ENCODE measurements at regions of chr2 and their contacts with region 1.

Region 1: GRCh38 chr2:156400706-156401678 is 35.2 kb upstream of the GPD2 start:
- DNase-seq: peak; percentile 82
- ATAC-seq: peak; percentile 78
- H3K4me3 ChIP-seq: peak overlapping the region; percentile 70
- H3K27ac ChIP-seq: peak overlapping the region; percentile 86
- H3K4me1 ChIP-seq: peaks cover 17% of the 10 kb centered on the region
- H3K27me3 ChIP-seq: no peaks in the 10 kb centered on the region
- CTCF ChIP-seq: no peak
- EP300 ChIP-seq: peak in 1 of 2 experiments; percentile 83; a peak in 1 of 4 replicates
- POLR2A ChIP-seq: no peak
- RAD21 ChIP-seq: no peak

Region 2: DNA sequence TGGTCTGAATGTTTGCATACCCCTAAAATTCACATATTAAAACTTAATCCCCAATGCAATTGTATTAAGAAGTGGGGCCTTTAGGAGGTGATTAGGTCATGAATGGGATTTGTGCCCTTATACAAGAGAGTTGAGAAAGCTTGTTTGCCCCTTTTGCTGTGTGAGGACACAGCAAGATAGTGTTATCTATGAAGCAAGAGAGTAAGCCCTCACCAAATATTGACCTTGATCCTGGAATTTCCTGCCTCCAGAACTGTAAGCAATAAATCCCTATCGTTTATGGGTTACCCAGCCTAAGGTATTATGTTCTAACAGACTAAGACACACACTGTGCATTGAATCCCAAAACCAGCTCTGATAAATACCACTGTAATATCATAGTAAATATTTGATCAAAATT is 100.7 kb before region 1 on chr2:
- CTCF ChIA-PET with region 1: no interaction called
- POLR2A ChIA-PET with region 1: no interaction called
- RAD21 ChIA-PET with region 1: no interaction called
- SMC1A ChIA-PET with region 1: no interaction called
- in situ Hi-C with region 1: no loop called
- intact Hi-C with region 1: no loop called
- DNase-seq: no peak
- ATAC-seq: no peak
- H3K4me3 ChIP-seq: no peak overlapping the region
- H3K27ac ChIP-seq: no peak overlapping the region
- H3K4me1 ChIP-seq: no peaks in the 10 kb centered on the region
- H3K27me3 ChIP-seq: no peaks in the 10 kb centered on the region; a peak in 1 of 4 replicates
- CTCF ChIP-seq: no peak
- EP300 ChIP-seq: no peak
- POLR2A ChIP-seq: no peak
- RAD21 ChIP-seq: no peak

Region 3: DNA sequence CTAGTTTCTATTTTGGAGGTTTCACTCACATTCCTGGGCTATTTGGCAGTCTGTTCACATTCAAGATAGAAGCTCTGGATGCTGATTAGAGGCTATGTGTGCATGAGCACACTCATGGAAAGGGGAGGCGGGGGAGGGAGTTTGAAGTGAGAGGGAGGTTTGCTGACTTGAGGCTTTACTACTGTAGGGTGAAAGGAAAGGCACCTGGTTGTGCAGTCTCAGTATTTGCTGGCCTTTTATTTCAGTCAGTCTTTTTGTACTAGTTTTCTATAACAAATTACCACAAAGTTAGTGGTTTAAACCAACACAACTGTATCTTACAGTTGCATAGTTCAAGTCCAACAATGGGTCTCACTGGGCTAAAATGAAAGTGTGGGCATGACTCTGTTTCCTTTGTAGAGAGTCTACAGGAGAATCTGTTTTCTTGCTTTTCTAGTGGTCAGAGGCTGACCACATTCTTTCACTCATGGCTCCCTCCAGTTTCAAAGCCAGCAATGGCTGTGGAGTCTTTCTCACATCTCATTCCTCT is 20.8 kb before region 1 on chr2:
- CTCF ChIA-PET with region 1: interaction called, 9 read pairs
- POLR2A ChIA-PET with region 1: interaction called, 4 read pairs
- RAD21 ChIA-PET with region 1: interaction called, 12 read pairs
- SMC1A ChIA-PET with region 1: interaction called, 21 read pairs
- in situ Hi-C with region 1: no loop called
- intact Hi-C with region 1: loop called (anchors 1 kb)
- DNase-seq: peak; percentile 45
- ATAC-seq: peak; percentile 92
- H3K4me3 ChIP-seq: no peak overlapping the region
- H3K27ac ChIP-seq: no peak overlapping the region
- H3K4me1 ChIP-seq: peaks cover 12% of the 10 kb centered on the region
- H3K27me3 ChIP-seq: no peaks in the 10 kb centered on the region
- CTCF ChIP-seq: no peak
- EP300 ChIP-seq: no peak
- POLR2A ChIP-seq: no peak
- RAD21 ChIP-seq: no peak

Region 4: GRCh38 chr2:156385242-156385641 is 15.8 kb before region 1 on chr2:
- CTCF ChIA-PET with region 1: interaction called, 9 read pairs
- POLR2A ChIA-PET with region 1: interaction called, 4 read pairs
- RAD21 ChIA-PET with region 1: interaction called, 12 read pairs
- SMC1A ChIA-PET with region 1: interaction called, 21 read pairs
- in situ Hi-C with region 1: no loop called
- intact Hi-C with region 1: loop called (anchors 1 kb)
- DNase-seq: no peak
- ATAC-seq: no peak
- H3K4me3 ChIP-seq: no peak overlapping the region
- H3K27ac ChIP-seq: no peak overlapping the region
- H3K4me1 ChIP-seq: peaks cover 7% of the 10 kb centered on the region
- H3K27me3 ChIP-seq: no peaks in the 10 kb centered on the region
- CTCF ChIP-seq: no peak
- EP300 ChIP-seq: no peak
- POLR2A ChIP-seq: no peak
- RAD21 ChIP-seq: no peak

Region 5: GRCh38 chr2:157052685-157053224 is 651.8 kb after region 1 on chr2:
- CTCF ChIA-PET with region 1: no interaction called
- POLR2A ChIA-PET with region 1: no interaction called
- RAD21 ChIA-PET with region 1: no interaction called
- SMC1A ChIA-PET with region 1: no interaction called
- in situ Hi-C with region 1: no loop called
- intact Hi-C with region 1: no loop called
- DNase-seq: no peak
- ATAC-seq: peak; percentile 66
- H3K4me3 ChIP-seq: no peak overlapping the region
- H3K27ac ChIP-seq: no peak overlapping the region
- H3K4me1 ChIP-seq: no peaks in the 10 kb centered on the region
- H3K27me3 ChIP-seq: no peaks in the 10 kb centered on the region; a peak in 1 of 4 replicates
- CTCF ChIP-seq: 0 out of 6 replicates have a peak, but pooled peaks of 1 of the 3 experiments have one; percentile 6
- EP300 ChIP-seq: no peak
- POLR2A ChIP-seq: no peak
- RAD21 ChIP-seq: no peak